ENCODE measurements at regions of chr2 and their contacts with region 1.

Region 1: DNA sequence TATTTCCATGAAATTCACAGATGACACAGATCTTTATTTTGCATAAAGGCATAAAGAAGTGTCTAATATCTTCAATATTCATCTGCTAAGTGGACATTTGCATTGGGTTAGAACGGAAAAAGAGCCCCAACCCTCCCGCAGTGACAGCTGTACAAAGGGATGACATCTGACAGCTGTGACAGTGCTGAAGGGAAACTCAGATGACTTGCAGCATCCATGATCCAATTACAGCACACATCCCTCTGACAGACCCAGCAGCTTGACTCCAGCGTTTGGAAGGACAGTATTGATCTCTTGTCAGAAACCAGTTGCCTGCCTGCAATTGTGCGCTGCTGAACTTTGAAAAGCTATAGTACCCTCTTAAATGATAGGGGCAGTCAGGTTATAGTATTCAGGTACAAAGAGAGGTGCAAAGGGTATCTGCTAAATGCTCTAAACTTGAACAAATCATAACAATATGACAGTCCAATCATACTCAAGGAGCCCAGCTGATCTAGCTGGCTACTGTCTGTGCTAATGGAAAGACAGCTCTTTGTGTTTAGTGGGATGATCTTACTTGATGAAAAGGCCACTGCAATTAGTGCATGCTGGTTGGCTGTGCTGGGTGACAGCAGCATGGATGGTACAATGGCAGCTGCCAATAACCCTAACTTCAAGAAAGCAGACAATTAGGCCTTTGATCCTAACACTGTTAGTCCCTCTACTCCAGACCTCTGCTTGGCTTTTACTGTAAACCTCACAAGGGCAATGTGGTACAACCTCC is 599.2 kb downstream of the NR4A2 start:
- DNase-seq: no peak
- H3K4me3 ChIP-seq: no peak overlapping the region
- H3K27ac ChIP-seq: no peak overlapping the region
- H3K4me1 ChIP-seq: no peaks in the 10 kb centered on the region
- H3K27me3 ChIP-seq: no peaks in the 10 kb centered on the region
- CTCF ChIP-seq: no peak
- EP300 ChIP-seq: no peak
- POLR2A ChIP-seq: no peak

Region 2: DNA sequence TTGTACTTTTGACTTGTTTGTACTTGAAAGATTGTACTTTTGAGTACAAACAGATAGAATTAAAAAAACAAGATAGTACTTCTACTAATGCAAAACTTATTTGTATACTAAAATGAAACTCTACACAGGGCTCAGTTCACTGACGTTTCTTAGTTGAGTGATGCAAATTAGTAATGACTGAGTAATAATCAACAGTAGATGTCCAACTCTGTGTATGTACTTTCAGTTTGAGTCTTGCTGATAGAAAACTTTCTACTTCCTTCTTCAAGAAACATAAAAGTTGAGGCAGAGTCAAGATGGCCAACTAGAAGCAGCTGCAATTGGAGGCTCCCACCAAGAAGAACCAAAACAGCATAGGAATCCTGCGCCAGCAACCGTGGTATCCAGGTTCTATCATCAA is 14.3 kb after region 1 on chr2:
- intact Hi-C with region 1: loop called in 1 of 4 experiments (anchors 2 kb)
- DNase-seq: no peak
- H3K4me3 ChIP-seq: no peak overlapping the region
- H3K27ac ChIP-seq: no peak overlapping the region
- H3K4me1 ChIP-seq: no peaks in the 10 kb centered on the region
- H3K27me3 ChIP-seq: peaks cover 4% of the 10 kb centered on the region
- CTCF ChIP-seq: no peak
- EP300 ChIP-seq: no peak
- POLR2A ChIP-seq: no peak

Measured in ovary (tissue), 10 donors.